Sciatic nerve (tissue), 2 donors: ENCODE measurements at regions of chr10 and their contacts with region 1.

Region 1: DNA sequence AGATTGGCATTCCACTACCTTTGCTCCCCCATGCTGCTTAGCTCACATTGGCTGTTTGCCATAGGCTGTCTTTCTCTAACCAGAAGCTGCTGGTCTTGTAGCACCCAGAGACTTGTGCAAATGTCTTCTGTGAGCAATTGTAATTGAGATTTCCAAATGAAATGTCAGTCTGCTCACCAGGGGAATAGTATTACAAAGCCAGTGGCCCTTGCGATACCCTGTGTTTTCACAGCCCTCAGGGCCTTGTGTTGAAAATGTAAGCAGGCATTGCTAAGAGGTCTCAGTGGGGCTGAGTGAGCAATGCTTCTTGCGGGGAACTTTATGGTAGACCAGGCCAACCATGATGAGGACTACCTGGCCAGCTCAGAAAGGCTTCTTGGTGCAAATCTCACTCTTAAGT is 746.5 kb downstream of the LRMDA start:
- DNase-seq: no peak
- ATAC-seq: no peak

Region 2: DNA sequence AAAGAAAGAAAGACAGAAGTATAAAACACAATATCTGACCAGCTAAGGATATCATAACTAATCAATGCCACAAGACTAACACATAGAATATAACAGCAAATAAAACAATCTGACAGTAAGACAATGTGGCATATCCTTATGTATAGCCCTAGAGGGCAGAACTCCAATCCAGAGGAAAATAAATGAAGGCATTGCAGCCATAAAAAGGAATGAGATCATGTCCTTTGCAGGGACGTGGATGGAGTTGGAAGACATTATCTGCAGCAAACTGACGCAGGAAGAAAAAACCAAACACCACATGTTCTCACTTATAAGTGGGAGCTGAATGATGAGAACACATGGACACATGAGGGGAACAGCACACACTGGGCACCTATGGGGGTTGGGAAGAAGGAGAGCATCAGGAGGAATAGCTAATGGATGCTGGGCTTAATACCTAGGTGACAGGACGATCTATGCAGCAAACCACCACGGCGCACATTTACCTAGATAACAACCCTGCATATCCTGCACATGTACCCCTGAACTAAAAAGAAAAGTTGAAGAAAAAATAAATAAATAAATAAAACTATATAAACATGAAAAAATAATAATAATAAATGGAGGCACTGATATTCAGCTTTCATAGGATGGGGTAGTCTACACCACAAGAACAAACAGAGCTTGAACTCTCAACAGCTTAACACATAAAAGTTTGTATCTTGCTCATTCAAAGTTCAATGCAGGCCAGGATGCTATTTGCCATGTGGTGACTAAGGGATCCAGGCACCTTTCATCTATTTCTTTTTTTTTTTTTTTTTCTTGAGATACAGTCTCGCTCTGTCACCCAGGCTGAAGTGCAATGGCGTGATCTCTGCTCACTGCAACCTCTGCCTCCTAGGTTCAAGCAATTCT is 1417.6 kb before region 1 on chr10:
- intact Hi-C with region 1: loop called (anchors 5 kb)
- DNase-seq: no peak
- ATAC-seq: no peak